Caco-2 (cell line): ENCODE measurements at regions of chr2 and their contacts with region 1.

Region 1: DNA sequence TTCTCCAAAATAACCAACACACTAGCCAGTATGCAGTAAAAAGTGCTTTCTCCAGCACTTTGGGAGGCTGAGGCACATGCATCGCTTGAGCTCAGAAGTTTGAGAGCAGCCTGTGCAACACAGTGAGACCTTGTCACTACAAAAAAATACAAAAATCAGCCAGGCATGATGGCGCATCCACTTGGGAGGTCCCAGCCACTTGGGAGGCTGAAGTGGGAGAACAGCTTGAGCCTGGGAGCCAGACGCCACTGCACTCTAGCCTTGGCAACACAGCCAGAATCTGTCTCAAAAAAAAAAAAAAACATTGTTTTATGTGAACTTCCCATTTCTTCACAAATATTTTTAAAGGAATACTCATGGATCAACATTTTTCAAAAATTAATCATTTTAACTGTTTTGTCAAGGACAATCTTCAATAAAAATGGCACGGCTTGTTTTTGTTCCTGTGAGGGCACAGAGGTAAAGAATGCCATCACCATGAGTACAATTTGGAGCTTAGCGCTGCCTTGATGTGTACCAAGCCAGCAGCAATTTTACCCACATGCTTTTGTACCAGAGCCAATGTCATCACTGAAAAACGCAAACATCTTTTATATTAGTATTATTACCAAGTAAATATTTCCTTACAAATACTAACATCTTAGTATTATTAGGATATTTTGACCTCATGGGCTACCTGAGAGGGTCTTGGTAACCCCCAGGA is 26.7 kb downstream of the RAB1A start:
- DNase-seq: no peak
- H3K4me3 ChIP-seq: no peak overlapping the region
- H3K4me3 Mint-ChIP-seq: no peak overlapping the region
- H3K27ac Mint-ChIP-seq: no peak overlapping the region
- H3K4me1 ChIP-seq: no peaks in the 10 kb centered on the region
- H3K4me1 Mint-ChIP-seq: peaks cover 6% of the 10 kb centered on the region
- H3K27me3 ChIP-seq: no peaks in the 10 kb centered on the region
- H3K27me3 Mint-ChIP-seq: no peaks in the 10 kb centered on the region
- CTCF ChIP-seq: no peak

Region 2: DNA sequence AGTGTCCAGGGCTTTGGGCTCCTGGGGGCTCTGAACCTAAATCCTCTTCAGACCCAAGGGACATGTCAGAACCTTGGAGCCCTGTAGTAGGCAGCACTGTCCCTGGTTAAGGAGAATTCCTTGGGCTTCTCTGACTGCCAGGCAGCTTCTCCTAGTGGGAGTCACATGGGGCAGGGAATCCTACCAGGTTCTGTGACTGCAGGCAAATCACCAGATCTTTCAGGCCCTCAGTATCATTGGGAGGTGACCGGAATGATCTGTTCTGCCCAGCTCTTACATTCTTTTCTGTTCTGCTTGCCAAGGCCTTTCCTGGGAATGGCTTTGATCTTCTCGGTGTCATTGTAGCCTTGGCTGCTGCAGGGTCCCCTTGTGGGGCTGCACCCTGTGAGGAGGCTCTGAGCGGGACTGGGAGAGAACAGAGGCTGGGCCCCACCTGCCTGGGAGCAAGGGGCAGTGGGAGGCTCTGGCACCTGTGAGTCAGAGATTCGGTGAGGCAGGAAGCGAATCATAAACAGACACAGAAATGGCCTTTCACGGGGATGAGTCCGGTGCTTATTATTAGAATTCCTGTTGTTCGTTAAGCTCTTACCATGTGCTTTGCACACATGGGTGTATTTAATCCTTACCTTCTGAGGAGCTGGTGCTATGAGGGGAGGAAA is 32.9 kb before region 1 on chr2:
- CTCF ChIA-PET with region 1: interaction called, 10 read pairs
- POLR2A ChIA-PET with region 1: no interaction called
- intact Hi-C with region 1: no loop called
- DNase-seq: no peak
- H3K4me3 ChIP-seq: no peak overlapping the region
- H3K4me3 Mint-ChIP-seq: no peak overlapping the region
- H3K27ac Mint-ChIP-seq: no peak overlapping the region
- H3K4me1 ChIP-seq: no peaks in the 10 kb centered on the region
- H3K4me1 Mint-ChIP-seq: no peaks in the 10 kb centered on the region
- H3K27me3 ChIP-seq: no peaks in the 10 kb centered on the region
- H3K27me3 Mint-ChIP-seq: no peaks in the 10 kb centered on the region
- CTCF ChIP-seq: no peak

Region 3: GRCh38 chr2:65146078-65146477 is 42.9 kb after region 1 on chr2:
- CTCF ChIA-PET with region 1: no interaction called
- POLR2A ChIA-PET with region 1: no interaction called
- intact Hi-C with region 1: no loop called
- DNase-seq: no peak
- H3K4me3 ChIP-seq: no peak overlapping the region
- H3K4me3 Mint-ChIP-seq: no peak overlapping the region
- H3K27ac Mint-ChIP-seq: no peak overlapping the region
- H3K4me1 ChIP-seq: no peaks in the 10 kb centered on the region; the same call in 1 of the 2 replicates
- H3K4me1 Mint-ChIP-seq: no peaks in the 10 kb centered on the region
- H3K27me3 ChIP-seq: no peaks in the 10 kb centered on the region
- H3K27me3 Mint-ChIP-seq: no peaks in the 10 kb centered on the region
- CTCF ChIP-seq: no peak